ENCODE measurements at regions of chr4 and their contacts with region 1.

Region 1: GRCh38 chr4:140049024-140049848 is 104.7 kb downstream of the MAML3 start:
- DNase-seq: peak; percentile 18 to 71
- H3K4me3 ChIP-seq: peak overlapping the region; percentile 52 to 62
- H3K27ac ChIP-seq: peak overlapping the region; percentile 67 to 71
- H3K4me1 ChIP-seq: peaks cover 3 to 9% of the 10 kb centered on the region in 2 donors
- H3K27me3 ChIP-seq: no peaks in the 10 kb centered on the region
- CTCF ChIP-seq: peak in 1 of 3 experiments; percentile 30

Region 2: DNA sequence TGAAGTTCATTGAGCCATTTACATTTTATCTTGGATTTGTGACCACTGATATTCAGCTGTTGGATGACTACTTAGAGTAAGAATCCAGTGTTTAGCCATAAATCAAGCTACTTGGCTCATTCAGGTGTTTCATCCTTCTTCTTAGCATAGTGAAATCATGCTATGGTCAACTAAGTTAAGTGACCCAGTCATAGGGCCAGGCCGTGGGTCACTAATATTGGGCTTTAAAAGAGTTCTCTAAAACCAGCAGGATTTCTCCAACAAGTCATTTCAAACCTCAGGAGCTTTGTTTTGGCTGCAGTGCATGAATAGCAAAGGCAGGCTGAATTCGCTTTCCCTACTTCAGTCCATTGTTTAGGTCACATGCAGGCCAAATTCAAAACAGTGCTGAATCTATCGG is 76.2 kb before region 1 on chr4:
- intact Hi-C with region 1: loop called (anchors 5 kb)
- DNase-seq: no peak
- H3K4me3 ChIP-seq: no peak overlapping the region
- H3K27ac ChIP-seq: peak overlapping the region; percentile 67 to 76
- H3K4me1 ChIP-seq: peaks cover 7 to 35% of the 10 kb centered on the region in 2 donors
- H3K27me3 ChIP-seq: no peaks in the 10 kb centered on the region
- CTCF ChIP-seq: no peak

Region 3: GRCh38 chr4:140012688-140013486 is 36.3 kb before region 1 on chr4:
- intact Hi-C with region 1: loop called (anchors 2 kb)
- DNase-seq: peak in 1 of 2 donors; percentile 75
- H3K4me3 ChIP-seq: peak overlapping the region in 1 of 2 donors; percentile 20
- H3K27ac ChIP-seq: no peak overlapping the region
- H3K4me1 ChIP-seq: peaks cover 0 to 5% of the 10 kb centered on the region in 2 donors
- H3K27me3 ChIP-seq: no peaks in the 10 kb centered on the region
- CTCF ChIP-seq: peak; percentile 34 to 53 (median 50)